Panc1 (cell line): ENCODE measurements at regions of chr12 and their contacts with region 1.

Region 1: DNA sequence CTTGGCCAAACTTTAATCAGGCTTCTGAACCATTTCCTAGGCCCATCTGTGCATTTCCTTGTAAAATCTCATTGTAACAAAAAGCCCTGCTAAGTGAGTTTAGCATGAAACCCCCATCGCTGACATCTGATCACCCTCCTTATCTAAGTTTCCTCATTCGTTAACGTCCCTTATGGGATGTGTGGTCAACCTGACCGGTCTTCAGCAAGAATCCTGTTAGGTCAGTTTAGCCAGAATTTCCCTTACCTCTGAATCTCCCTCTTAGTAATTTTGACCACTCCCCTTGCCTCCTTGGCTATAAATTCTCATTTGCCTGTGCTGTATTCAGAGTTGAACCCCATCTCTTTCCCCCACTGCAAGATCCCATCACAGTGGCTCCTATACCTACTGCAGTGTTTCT is 239.3 kb downstream of the RMST start:
- DNase-seq: no peak
- ATAC-seq: no peak
- H3K4me3 ChIP-seq: no peak overlapping the region
- H3K27ac ChIP-seq: no peak overlapping the region
- H3K4me1 ChIP-seq: no peaks in the 10 kb centered on the region
- H3K27me3 ChIP-seq: no peaks in the 10 kb centered on the region
- CTCF ChIP-seq: no peak

Region 2: DNA sequence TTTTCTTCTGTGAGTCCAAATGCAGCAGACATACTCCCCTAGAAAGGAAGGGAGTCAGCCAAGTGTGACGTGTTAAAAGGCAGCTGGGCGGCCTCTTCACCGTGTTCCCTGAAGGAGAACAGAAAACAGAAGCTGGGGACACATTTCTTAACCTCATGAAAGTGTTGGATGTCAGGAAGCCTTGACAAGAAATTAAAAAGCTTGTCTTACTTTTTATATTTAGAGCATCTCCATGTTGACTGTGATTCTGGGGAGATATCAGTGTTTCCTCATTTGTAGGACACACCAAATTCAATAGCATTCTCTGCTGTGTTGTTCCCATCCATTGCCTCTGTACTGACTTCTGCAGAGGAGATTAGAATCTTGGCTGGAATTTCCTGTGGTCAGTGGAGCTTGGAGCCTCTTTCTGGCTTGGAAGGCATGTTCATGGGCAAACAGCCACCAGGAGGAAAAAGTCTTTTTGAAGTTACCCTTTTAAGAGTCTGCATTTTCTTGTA is 145.5 kb before region 1 on chr12:
- CTCF ChIA-PET with region 1: no interaction called
- POLR2A ChIA-PET with region 1: no interaction called
- in situ Hi-C with region 1: no loop called
- intact Hi-C with region 1: loop called (anchors 10 kb)
- DNase-seq: no peak
- ATAC-seq: peak; percentile 97
- H3K4me3 ChIP-seq: 0 out of 4 replicates have a peak overlapping the region, but pooled peaks of 1 of the 2 experiments have one; percentile 8
- H3K27ac ChIP-seq: peak overlapping the region; percentile 96
- H3K4me1 ChIP-seq: peaks cover 49% of the 10 kb centered on the region
- H3K27me3 ChIP-seq: no peaks in the 10 kb centered on the region
- CTCF ChIP-seq: no peak

Region 3: DNA sequence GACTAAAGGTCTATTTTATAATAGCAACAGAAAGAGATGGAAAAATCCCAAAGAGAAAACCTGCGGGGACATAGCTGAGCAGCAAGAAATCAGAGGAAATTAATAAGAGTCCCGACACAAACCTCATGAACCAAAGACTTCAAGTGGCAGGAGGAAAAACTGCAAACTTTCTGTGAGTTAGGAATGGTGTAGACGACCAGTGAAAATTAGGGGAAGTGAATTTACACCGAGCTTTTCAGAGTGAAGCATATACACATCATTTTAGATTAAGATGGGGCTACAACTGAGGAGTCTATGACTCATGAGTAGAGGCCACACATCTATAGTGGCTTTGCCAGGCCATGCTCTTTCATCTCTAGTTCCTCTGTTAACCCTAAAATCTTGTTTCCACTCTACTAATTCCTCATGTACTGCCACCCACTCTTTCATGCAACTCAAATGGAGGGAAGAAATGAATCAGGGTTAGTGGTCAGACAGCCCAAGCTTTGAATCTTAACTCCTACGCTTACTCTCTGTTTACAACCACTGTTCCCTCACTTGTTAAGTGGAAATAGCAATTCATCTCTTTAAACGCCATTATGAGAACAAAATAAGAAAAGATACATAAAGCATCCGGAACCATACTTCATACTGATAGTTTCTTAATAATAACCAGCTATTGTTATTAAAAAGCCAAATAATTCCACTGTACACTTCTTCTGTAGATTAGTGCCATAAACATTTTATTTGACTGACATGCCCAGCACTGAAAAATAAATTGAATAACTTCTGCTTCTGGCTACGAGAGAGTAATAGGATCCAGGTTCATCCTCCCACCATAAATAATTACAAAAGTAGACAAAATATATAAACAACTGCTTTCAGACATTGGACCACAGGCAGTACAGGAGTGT is 20.0 kb before region 1 on chr12:
- CTCF ChIA-PET with region 1: no interaction called
- POLR2A ChIA-PET with region 1: no interaction called
- in situ Hi-C with region 1: no loop called
- intact Hi-C with region 1: no loop called
- DNase-seq: no peak
- ATAC-seq: no peak
- H3K4me3 ChIP-seq: no peak overlapping the region
- H3K27ac ChIP-seq: no peak overlapping the region
- H3K4me1 ChIP-seq: no peaks in the 10 kb centered on the region
- H3K27me3 ChIP-seq: no peaks in the 10 kb centered on the region
- CTCF ChIP-seq: no peak

Region 4: GRCh38 chr12:97921979-97922722 is 220.3 kb after region 1 on chr12:
- CTCF ChIA-PET with region 1: no interaction called
- POLR2A ChIA-PET with region 1: no interaction called
- in situ Hi-C with region 1: no loop called
- intact Hi-C with region 1: no loop called
- DNase-seq: no peak
- ATAC-seq: no peak
- H3K4me3 ChIP-seq: no peak overlapping the region
- H3K27ac ChIP-seq: no peak overlapping the region
- H3K4me1 ChIP-seq: no peaks in the 10 kb centered on the region
- H3K27me3 ChIP-seq: no peaks in the 10 kb centered on the region
- CTCF ChIP-seq: no peak